Naive thymus-derived CD4-positive, alpha-beta T cell (primary cell): ENCODE measurements at regions of chr6 and their contacts with region 1.

Region 1: GRCh38 chr6:90383196-90383822 is 86.7 kb upstream of the BACH2 start:
- DNase-seq: peak in 6 of 9 donors; percentile 16 to 50 (median 22)
- ATAC-seq: peak; percentile 67
- H3K4me3 ChIP-seq: no peak overlapping the region
- H3K4me3 Mint-ChIP-seq: peak overlapping the region in 7 of 10 donors; percentile 0 to 60 (median 21)
- H3K27ac ChIP-seq: no peak overlapping the region
- H3K27ac Mint-ChIP-seq: peak overlapping the region in 6 of 9 donors; percentile 3 to 39 (median 28)
- H3K4me1 ChIP-seq: peaks cover 8 to 10% of the 10 kb centered on the region in 2 donors
- H3K4me1 Mint-ChIP-seq: peaks cover 6 to 41% (median 25%) of the 10 kb centered on the region in 7 donors
- H3K27me3 ChIP-seq: no peaks in the 10 kb centered on the region
- H3K27me3 Mint-ChIP-seq: peaks cover 0 to 22% (median 0%) of the 10 kb centered on the region in 5 donors

Region 2: GRCh38 chr6:90319044-90319443 is 64.3 kb before region 1 on chr6:
- CTCF ChIA-PET with region 1: no interaction called
- POLR2A ChIA-PET with region 1: no interaction called
- intact Hi-C with region 1: loop called in 1 of 2 experiments (anchors 5 kb)
- DNase-seq: no peak
- ATAC-seq: peak; percentile 24
- H3K4me3 ChIP-seq: no peak overlapping the region
- H3K4me3 Mint-ChIP-seq: no peak overlapping the region
- H3K27ac ChIP-seq: no peak overlapping the region
- H3K27ac Mint-ChIP-seq: no peak overlapping the region
- H3K4me1 ChIP-seq: no peaks in the 10 kb centered on the region
- H3K4me1 Mint-ChIP-seq: peaks cover 0 to 18% (median 11%) of the 10 kb centered on the region in 7 donors
- H3K27me3 ChIP-seq: no peaks in the 10 kb centered on the region
- H3K27me3 Mint-ChIP-seq: peaks cover 0 to 11% (median 0%) of the 10 kb centered on the region in 5 donors